Sciatic nerve (tissue), 2 donors: ENCODE measurements at regions of chr2 and their contacts with region 1.

Region 1: DNA sequence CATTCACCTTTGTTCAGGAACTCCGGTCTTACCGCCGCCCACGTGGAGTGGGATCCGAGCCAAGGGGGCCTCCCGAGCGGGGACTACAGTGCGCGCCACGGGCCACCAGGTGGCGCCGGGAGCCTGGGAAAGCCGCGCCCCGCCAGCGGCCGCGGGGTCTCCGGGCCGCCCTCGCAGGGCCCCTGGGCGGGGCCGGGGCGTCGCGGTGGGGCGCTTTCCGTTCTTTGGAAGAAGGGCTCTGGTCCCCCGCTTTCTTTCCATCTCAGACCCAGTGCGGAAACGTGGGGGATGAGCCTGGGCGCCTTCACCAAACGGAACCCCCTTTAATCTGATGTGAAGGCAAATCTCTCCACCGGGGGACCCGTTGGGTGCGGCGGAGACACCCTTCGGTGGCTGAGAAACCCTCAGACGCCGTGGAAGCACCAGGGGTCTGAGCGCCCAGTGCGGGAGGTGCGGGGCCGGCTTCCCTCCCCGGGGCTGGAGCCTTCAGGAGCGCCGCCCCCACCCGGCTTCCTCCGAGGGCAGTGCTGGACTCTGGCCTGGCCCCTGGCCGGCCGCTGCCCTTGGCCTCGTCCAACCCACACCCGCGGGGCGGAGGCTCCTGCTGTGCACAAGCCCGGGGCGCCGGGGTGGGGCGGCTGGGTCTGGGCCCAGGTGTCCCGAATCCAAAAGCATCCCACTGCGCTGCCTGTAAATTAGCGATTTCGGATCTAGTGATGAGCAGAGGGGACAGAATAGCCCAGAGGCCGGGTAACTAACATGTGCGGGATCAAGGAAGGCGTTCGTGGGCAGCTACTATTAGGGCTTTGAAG is 44.6 kb downstream of the GORASP2 start:
- DNase-seq: peak; percentile 93
- ATAC-seq: peak; percentile 96

Region 2: GRCh38 chr2:170063456-170064235 is 910.1 kb before region 1 on chr2:
- intact Hi-C with region 1: no loop called
- DNase-seq: no peak
- ATAC-seq: no peak

Region 3: GRCh38 chr2:170930131-170930990 is 43.3 kb before region 1 on chr2:
- intact Hi-C with region 1: loop called (anchors 1 kb)
- DNase-seq: no peak
- ATAC-seq: no peak

Region 4: DNA sequence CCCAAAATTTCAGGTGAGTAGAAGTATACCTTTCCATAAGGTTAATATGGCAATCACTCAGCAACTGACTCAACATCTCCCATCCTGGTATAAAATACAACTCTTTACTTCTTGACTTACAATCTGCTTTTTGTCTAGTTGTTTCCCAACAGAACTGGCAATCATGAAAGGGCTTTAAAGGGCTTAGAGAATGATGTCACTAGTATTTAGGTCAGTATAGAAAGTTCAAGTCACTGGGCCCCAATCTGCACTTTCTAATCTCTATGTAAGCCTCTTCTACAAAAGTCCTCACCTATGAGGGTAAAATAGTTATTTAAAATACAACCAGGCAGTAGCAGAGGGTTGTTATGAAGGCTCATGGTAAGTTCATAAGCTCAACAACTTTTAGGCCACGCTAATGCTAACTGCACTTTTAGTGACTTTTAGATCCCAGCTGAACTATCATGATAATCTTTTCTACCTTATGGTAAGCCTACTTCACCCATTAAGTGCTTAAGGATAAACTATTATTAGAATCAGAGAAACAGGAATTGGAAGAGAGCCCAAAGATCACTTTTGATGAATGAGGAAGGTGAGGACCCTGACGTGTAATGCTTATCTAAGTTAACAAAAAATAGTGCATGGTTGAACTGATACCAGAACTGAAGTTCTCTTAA is 35.0 kb after region 1 on chr2:
- intact Hi-C with region 1: no loop called
- DNase-seq: no peak
- ATAC-seq: no peak

Region 5: DNA sequence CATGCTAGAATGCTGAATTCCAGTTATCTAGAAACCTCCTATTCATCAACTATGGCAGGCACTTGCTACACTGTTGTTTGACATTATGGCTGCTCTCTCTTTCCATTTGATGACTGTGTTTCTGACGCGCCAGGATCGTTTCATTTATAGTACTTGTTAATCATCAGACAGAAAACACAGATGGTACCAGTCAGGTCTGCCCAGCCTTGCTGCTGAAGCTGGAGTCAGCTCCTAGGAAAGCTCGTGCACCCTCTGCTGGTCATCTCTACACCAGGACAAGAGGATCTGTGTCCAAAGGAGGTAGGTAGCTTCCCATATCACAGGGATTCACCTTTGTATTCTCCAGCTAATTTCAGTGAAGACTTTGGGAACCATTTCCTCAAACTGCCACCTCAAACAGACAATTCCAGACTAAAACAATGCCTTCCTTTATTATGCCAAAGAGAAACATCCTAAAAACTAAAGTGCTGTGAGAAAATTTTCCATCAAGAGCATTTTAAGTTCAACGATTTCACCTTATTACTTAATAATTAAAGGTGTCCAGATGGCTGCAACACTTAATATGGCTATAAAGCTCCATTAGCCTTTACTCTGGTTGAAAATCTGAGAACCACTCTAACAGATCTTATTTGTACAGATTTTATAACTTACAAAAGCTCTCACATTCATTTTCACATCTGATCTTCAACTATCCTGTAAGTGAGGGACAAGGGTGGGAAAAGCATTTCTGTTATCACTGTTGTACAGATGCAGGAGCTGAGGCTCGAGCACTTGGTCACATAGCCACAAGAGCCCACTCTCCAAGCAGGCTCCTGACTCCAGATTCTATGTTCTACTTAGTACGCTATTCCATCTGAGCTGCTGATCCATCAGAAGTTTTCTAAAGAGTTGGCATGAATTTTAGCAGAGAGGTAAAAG is 442.6 kb after region 1 on chr2:
- intact Hi-C with region 1: loop called (anchors 10 kb)
- DNase-seq: peak; percentile 92
- ATAC-seq: peak; percentile 97